RWPE1 (cell line): ENCODE measurements at regions of chr16 and their contacts with region 1.

Region 1: GRCh38 chr16:1356061-1356900 is 4.5 kb downstream of the GNPTG start:
- DNase-seq: no peak
- H3K27ac ChIP-seq: peak overlapping the region; percentile 47; the same call in 1 of the 2 replicates
- CTCF ChIP-seq: no peak

Region 2: GRCh38 chr16:1199342-1200013 is 156.8 kb before region 1 on chr16:
- CTCF ChIA-PET with region 1: no interaction called
- POLR2A ChIA-PET with region 1: no interaction called
- DNase-seq: no peak
- H3K27ac ChIP-seq: no peak overlapping the region
- CTCF ChIP-seq: no peak

Region 3: DNA sequence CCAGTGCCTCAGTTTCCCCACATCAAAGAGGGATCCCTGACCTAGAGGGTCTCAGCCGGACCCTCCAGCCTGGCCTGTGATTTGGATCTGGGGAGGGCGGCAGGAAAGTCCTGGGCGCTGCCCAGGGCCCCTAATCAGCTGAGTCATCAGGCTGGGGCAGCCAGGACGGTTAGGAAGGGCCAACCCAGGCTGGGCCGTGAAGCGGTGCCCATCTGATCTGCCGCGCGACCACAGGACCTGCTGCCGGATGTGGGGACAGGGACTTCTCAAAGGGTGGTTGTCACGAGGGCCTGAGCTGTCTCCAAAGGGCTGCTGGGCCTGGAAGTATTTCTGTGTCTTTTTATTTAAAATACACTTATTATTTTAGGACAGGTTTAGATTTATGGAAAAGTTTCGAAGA is 111.4 kb before region 1 on chr16:
- CTCF ChIA-PET with region 1: no interaction called
- POLR2A ChIA-PET with region 1: interaction called, 12 read pairs
- DNase-seq: no peak
- H3K27ac ChIP-seq: no peak overlapping the region
- CTCF ChIP-seq: no peak

Region 4: DNA sequence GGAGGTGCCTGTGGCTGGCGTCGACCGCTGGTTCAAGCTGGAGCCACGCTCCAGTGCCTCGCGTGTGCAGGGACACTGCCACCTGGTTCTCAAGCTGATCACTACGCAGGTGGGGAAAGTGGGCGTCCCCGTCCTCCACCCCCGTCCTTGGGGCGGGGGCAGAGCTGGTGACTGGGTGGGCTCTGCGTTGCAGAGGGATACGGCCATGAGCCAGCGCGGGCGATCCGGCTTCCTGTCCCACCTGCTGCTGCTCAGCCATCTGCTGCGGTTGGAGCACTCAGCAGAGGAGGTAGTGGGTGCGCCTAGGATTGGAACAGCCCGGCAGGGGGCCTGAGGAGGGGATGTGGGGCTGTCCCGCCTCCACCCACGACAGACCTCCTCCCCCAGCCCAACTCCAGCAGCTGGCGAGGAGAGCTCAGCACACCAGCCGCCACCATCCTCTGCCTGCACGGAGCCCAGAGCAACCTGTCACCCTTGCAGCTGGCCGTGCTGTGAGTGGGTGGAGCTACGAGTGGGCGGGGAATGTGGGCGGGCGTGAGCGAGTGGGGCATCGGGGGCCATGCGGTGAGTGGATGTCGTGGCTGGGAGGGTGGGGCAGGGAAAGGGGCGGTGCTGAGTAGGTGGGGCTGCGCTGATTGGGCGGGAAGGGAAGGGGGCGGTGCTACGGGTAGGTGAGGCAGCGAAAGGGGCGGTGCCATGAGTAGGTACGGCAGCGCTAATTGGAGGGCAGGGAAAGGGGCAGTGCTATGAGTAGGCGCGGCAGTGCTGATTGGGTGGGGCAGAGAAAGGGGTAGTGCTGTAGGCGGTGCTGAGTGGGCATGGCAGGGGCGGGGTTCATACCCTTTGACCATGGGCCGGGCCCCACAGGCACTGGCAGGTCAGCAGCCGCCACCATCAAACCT is 13.5 kb before region 1 on chr16:
- CTCF ChIA-PET with region 1: no interaction called
- POLR2A ChIA-PET with region 1: no interaction called
- DNase-seq: peak; percentile 99
- H3K27ac ChIP-seq: peak overlapping the region; percentile 39
- CTCF ChIP-seq: no peak